Naive thymus-derived CD4-positive, alpha-beta T cell (primary cell): ENCODE measurements at regions of chr21 and their contacts with region 1.

Region 1: DNA sequence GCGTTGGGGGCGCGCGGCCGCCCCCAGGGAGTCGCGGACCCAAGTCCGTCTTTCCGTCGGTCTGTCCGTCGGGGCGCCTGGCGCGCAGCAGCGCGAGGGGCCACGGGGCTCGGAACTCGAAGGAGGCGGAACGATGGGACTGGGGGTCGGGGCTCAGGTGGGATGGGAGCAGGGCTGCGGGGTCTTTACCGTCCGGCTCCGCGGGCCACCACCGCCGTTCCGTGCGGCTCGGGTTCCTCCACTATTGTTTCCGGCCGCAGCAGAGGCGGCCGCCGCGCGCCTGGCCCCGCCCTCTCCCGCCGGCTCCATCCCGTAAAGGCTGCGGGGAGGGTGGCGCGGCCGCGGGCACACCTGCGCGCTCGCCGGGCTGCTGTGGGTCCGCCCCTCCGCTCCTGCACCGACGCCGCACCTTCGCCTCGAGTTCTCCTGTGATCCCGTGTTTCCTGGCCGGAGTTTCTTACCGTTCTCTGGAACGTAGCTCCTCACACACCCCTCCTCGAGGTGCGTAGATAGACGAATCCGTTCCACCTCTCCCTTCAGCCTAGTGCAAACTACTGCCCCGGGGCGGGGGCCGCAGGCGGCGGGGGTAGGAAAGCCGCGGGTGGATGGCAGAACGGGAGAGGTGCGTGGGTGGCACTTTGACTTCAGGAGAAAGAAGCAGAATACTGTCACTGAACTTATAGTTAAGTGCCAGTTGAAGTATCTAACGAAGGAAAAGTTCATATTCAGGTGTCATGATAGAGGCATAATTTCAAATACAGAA is at the start of gene C21orf91:
- DNase-seq: peak; percentile 78 to 92 (median 91)
- ATAC-seq: peak; percentile 94
- H3K4me3 ChIP-seq: peak within 1 kb of the TSS; percentile 71
- H3K4me3 Mint-ChIP-seq: peak within 1 kb of the TSS; percentile 94 to 100 (median 97)
- H3K27ac ChIP-seq: peak within 1 kb of the TSS; percentile 89
- H3K27ac Mint-ChIP-seq: peak within 1 kb of the TSS; percentile 96 to 100 (median 100)
- H3K4me1 ChIP-seq: peaks cover 26 to 34% of the 10 kb centered on the region in 2 donors
- H3K4me1 Mint-ChIP-seq: peaks cover 28 to 63% (median 50%) of the 10 kb centered on the region in 7 donors
- H3K27me3 ChIP-seq: no peaks in the 10 kb centered on the region
- H3K27me3 Mint-ChIP-seq: no peaks in the 10 kb centered on the region
- total RNA-seq, gene C21orf91: 26.0 to 59.8 (median 57.7) TPM

Region 2: GRCh38 chr21:17611414-17612022 is 207.8 kb before region 1 on chr21:
- CTCF ChIA-PET with region 1: no interaction called
- POLR2A ChIA-PET with region 1: interaction called, 4 read pairs
- intact Hi-C with region 1: loop called (anchors 1 kb)
- DNase-seq: peak; percentile 57 to 84 (median 73)
- ATAC-seq: peak; percentile 72
- H3K4me3 ChIP-seq: peak overlapping the region; percentile 83
- H3K4me3 Mint-ChIP-seq: peak overlapping the region; percentile 85 to 98 (median 90)
- H3K27ac ChIP-seq: peak overlapping the region; percentile 72
- H3K27ac Mint-ChIP-seq: peak overlapping the region; percentile 77 to 100 (median 93)
- H3K4me1 ChIP-seq: peaks cover 0 to 7% of the 10 kb centered on the region in 2 donors
- H3K4me1 Mint-ChIP-seq: peaks cover 7 to 65% (median 19%) of the 10 kb centered on the region in 7 donors
- H3K27me3 ChIP-seq: no peaks in the 10 kb centered on the region
- H3K27me3 Mint-ChIP-seq: no peaks in the 10 kb centered on the region

Region 3: DNA sequence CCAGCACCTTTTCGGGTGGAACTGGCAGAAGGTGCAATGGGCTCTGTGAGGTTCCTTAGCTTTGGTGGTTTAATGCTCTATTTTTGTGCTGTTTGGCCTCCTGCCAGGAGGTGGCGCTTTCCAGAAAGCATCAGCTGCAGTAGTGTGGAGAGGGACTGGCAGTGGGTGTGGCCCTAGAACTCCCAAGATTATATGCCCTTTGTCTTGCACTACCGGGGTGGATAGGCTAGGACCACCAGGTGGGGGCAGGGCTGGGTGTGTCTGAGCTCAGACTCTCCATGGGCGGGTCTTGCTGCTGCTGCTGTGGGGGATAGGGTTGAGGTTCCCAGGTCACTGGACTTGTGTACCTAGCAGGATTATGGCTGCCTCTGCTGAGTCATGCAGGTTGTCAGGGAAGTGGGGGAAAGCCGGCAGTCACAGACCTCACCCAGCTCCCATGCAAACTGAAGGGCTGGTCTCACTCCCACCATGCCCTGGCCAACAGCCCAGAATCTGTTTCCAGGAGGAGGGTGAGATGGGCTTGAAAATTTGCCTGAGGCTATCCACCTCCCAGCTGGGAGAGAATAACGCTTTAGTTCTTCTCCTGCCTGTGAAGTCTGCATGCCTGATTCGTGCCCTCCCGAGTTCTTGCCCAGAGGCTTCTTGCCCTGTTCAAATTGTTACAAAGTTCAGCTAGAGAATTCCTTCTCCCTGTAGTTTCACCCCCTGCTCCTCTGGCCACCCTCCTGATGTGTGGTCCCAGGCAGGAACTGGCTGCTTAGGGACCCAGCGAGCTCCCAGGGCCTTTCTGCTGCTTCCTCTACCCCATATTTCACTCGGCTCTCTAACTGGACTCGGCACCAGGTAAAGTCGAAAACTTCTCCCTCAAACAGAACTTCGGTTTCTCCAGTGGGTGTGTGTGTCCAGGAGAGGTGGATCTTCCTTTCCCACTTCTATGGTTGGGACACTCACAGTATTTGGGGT is 130.1 kb before region 1 on chr21:
- CTCF ChIA-PET with region 1: interaction called, 3 read pairs
- POLR2A ChIA-PET with region 1: interaction called, 4 read pairs
- intact Hi-C with region 1: loop called (anchors 2 kb)
- DNase-seq: peak; percentile 11 to 47 (median 37)
- ATAC-seq: no peak
- H3K4me3 ChIP-seq: no peak overlapping the region
- H3K4me3 Mint-ChIP-seq: peak overlapping the region in 2 of 10 donors; percentile 10 to 33
- H3K27ac ChIP-seq: no peak overlapping the region
- H3K27ac Mint-ChIP-seq: peak overlapping the region in 2 of 9 donors; percentile 38 to 40
- H3K4me1 ChIP-seq: peaks cover 0 to 6% of the 10 kb centered on the region in 2 donors
- H3K4me1 Mint-ChIP-seq: peaks cover 14 to 42% (median 36%) of the 10 kb centered on the region in 7 donors
- H3K27me3 ChIP-seq: no peaks in the 10 kb centered on the region
- H3K27me3 Mint-ChIP-seq: peaks cover 0 to 2% (median 0%) of the 10 kb centered on the region in 5 donors

Region 4: GRCh38 chr21:17786071-17786850 is 33.0 kb before region 1 on chr21:
- CTCF ChIA-PET with region 1: interaction called, 5 read pairs
- POLR2A ChIA-PET with region 1: interaction called, 148 read pairs
- intact Hi-C with region 1: loop called (anchors 1 kb)
- DNase-seq: no peak
- ATAC-seq: no peak
- H3K4me3 ChIP-seq: no peak overlapping the region
- H3K4me3 Mint-ChIP-seq: peak overlapping the region in 8 of 10 donors; percentile 4 to 88 (median 56)
- H3K27ac ChIP-seq: no peak overlapping the region
- H3K27ac Mint-ChIP-seq: peak overlapping the region; percentile 75 to 96 (median 92)
- H3K4me1 ChIP-seq: peaks cover 60 to 83% of the 10 kb centered on the region in 2 donors
- H3K4me1 Mint-ChIP-seq: peaks cover 57 to 100% (median 95%) of the 10 kb centered on the region in 7 donors
- H3K27me3 ChIP-seq: no peaks in the 10 kb centered on the region
- H3K27me3 Mint-ChIP-seq: no peaks in the 10 kb centered on the region

Region 5: DNA sequence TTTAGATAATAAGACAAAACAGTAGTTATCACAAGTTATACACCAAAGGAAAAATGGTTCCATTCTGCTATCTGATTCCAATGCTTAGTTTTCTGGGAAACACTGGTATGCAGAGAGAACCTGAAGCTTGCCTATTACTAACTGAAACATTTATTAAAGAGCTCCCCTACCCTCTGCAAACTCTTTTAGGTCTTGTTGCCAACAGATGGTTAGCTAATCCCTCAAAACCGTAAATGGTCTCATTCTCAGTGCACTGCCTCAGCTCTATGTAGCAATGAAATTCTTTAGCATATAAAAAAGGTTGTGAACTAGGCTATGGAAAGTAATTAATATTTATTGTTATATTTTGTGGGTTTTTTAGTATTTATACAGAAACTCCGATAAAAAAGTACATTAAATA is 20.5 kb before region 1 on chr21:
- CTCF ChIA-PET with region 1: interaction called, 6 read pairs
- POLR2A ChIA-PET with region 1: interaction called, 56 read pairs
- intact Hi-C with region 1: loop called (anchors 1 kb)
- DNase-seq: no peak
- ATAC-seq: no peak
- H3K4me3 ChIP-seq: no peak overlapping the region
- H3K4me3 Mint-ChIP-seq: peak overlapping the region in 1 of 10 donors; percentile 34
- H3K27ac ChIP-seq: peak overlapping the region; percentile 21
- H3K27ac Mint-ChIP-seq: peak overlapping the region in 7 of 9 donors; percentile 12 to 86 (median 61)
- H3K4me1 ChIP-seq: peaks cover 36 to 39% of the 10 kb centered on the region in 2 donors
- H3K4me1 Mint-ChIP-seq: peaks cover 24 to 78% (median 60%) of the 10 kb centered on the region in 7 donors
- H3K27me3 ChIP-seq: no peaks in the 10 kb centered on the region
- H3K27me3 Mint-ChIP-seq: no peaks in the 10 kb centered on the region

Region 6: DNA sequence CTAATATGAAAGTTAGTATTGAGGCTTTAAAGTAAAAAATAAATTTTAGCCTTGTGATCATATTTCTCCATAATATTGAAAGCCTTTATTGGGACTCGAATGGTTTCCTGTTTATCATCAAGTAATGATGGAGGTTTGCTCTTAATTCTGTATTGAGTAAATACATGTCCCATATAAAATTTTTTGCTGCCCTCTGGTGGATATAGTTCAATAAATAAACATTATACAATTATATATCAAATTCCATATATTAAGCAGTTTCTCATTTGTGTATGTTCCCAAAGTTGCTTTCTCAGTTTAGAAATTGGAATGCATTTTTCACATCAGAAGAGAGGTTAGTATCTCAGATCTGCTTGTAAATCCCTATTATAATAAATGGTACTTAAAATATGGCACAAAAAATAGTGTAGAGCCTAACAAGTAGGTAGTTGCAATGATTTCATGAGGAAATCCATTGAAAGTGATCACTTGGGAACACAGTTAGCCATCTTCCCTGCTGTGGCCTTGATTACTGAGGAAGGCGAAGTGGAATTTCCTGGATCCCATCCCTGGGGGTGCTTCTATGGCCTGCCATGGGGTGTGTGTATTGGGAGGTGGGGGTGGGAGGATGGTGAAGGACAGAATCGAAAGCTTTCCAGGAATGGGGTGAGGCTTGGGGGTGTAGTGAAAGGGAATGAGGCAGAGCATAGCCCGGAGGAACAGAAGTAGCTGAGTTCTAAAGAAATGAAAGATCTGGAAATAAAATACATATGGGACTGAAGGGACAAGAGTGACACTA is 83.9 kb after region 1 on chr21:
- CTCF ChIA-PET with region 1: interaction called, 4 read pairs
- POLR2A ChIA-PET with region 1: interaction called, 3 read pairs
- intact Hi-C with region 1: loop called (anchors 1 to 2 kb)
- DNase-seq: peak in 7 of 9 donors; percentile 10 to 58 (median 37)
- ATAC-seq: peak; percentile 79
- H3K4me3 ChIP-seq: no peak overlapping the region
- H3K4me3 Mint-ChIP-seq: no peak overlapping the region
- H3K27ac ChIP-seq: no peak overlapping the region
- H3K27ac Mint-ChIP-seq: no peak overlapping the region
- H3K4me1 ChIP-seq: no peaks in the 10 kb centered on the region
- H3K4me1 Mint-ChIP-seq: peaks cover 0 to 12% (median 3%) of the 10 kb centered on the region in 7 donors
- H3K27me3 ChIP-seq: no peaks in the 10 kb centered on the region
- H3K27me3 Mint-ChIP-seq: peaks cover 0 to 5% (median 0%) of the 10 kb centered on the region in 5 donors